Ascending aorta (tissue), 2 donors: ENCODE measurements at regions of chr19 and their contacts with region 1.

Region 1: DNA sequence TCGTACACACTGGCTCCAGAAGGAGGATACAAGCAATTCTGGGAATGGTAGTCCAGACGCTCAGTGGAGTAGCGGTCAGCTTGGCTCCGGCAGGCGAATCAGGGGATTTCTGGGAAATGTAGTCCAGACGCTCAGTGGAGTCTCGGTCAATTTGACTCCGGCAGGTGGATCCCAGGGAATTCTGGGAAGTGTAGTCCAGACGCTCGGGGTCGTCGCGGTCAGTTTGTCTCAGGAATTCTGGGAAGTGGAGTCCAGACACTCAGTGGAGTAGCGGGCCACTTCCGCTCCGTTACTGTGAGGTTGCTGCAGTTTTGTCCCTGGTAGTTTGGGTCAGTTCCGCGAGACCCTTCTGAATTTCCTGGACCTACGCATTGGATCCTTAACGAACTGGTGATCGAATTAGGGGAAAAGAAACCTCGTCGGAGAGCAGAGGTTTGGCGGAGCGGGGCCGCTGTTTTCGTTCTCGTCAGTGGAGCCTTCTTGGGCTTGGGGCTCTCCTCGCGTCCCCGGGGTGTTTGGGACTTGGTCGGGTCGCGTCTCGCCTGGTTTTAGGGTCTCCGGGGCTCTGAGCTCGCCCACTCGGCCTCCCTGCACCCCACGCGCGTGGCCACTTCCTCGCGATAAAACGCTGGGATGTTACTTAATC is at the start of gene ZNF225:
- DNase-seq: peak; percentile 92 to 99
- H3K4me3 ChIP-seq: peak within 1 kb of the TSS; percentile 79 to 84
- H3K27ac ChIP-seq: peak within 1 kb of the TSS; percentile 73 to 82
- H3K4me1 ChIP-seq: peaks cover 0 to 8% of the 10 kb centered on the region in 2 donors
- H3K27me3 ChIP-seq: no peaks in the 10 kb centered on the region
- CTCF ChIP-seq: no peak
- total RNA-seq, gene ZNF225: 3.3 TPM

Region 2: GRCh38 chr19:43826787-43827754 is 286.2 kb before region 1 on chr19 and contains the start of gene ZNF283:
- intact Hi-C with region 1: loop called (anchors 10 kb)
- DNase-seq: peak; percentile 60 to 94
- H3K4me3 ChIP-seq: peak within 1 kb of the TSS; percentile 56 to 75
- H3K27ac ChIP-seq: peak within 1 kb of the TSS; percentile 48 to 51
- H3K4me1 ChIP-seq: peaks cover 3 to 10% of the 10 kb centered on the region in 2 donors
- H3K27me3 ChIP-seq: no peaks in the 10 kb centered on the region
- CTCF ChIP-seq: no peak
- total RNA-seq, gene ZNF283: not detected

Region 3: DNA sequence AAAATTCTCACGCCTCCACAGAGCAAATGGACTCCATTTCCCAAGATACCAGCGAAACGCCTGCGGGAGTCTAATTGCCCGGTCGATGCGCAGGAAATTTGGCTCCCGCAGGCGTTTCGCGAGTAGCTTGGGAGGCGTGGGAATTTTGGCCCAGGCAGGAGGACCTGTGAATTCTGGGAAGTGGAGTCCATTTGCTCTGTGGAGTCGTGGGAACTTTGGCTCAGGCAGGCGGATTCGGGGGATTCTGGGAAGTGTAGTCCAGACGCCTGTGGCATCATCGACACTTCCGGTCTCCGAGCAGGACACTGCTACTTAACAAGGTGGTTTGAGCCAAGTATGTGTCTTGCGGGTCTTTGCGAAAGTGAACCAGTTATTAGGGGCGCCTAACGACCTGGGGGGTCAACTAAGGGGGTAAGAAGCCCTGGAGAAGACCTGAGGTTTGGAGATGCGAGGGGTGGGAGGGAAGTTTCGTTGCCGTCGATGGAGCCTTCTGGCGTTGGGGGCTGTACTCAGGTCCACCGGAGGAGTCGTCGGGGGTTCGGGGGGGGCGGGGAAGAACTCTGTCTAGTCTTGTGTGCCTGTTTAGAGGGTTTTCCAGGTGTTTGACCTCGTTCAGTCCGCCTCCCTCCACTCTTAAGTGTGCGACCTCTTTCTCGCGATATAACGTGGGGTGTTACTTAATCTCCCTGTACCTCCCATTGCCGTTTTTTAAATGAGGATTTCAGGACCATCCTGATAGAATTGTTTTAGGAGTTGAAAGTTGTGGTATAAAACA is 129.2 kb before region 1 on chr19 and contains the start of gene ZNF155:
- intact Hi-C with region 1: loop called (anchors 5 kb)
- DNase-seq: peak; percentile 77 to 95
- H3K4me3 ChIP-seq: peak within 1 kb of the TSS; percentile 74
- H3K27ac ChIP-seq: peak within 1 kb of the TSS; percentile 72 to 81
- H3K4me1 ChIP-seq: peaks cover 0 to 4% of the 10 kb centered on the region in 2 donors
- H3K27me3 ChIP-seq: no peaks in the 10 kb centered on the region
- CTCF ChIP-seq: no peak
- total RNA-seq, gene ZNF155: not detected

Region 4: GRCh38 chr19:44051654-44052402 is 61.4 kb before region 1 on chr19 and contains the start of gene ZNF223:
- intact Hi-C with region 1: loop called (anchors 1 kb)
- DNase-seq: peak; percentile 86 to 97
- H3K4me3 ChIP-seq: peak within 1 kb of the TSS; percentile 84 to 86
- H3K27ac ChIP-seq: peak within 1 kb of the TSS; percentile 61 to 71
- H3K4me1 ChIP-seq: peaks cover 4 to 7% of the 10 kb centered on the region in 2 donors
- H3K27me3 ChIP-seq: no peaks in the 10 kb centered on the region
- CTCF ChIP-seq: no peak
- total RNA-seq, gene ZNF223: not detected

Region 5: GRCh38 chr19:44141191-44142058 is 28.2 kb after region 1 on chr19 and contains the start of gene ZNF234:
- intact Hi-C with region 1: loop called (anchors 1 kb)
- DNase-seq: peak; percentile 35 to 88
- H3K4me3 ChIP-seq: peak within 1 kb of the TSS; percentile 69 to 96
- H3K27ac ChIP-seq: peak within 1 kb of the TSS; percentile 59 to 80
- H3K4me1 ChIP-seq: peaks cover 0 to 10% of the 10 kb centered on the region in 2 donors
- H3K27me3 ChIP-seq: no peaks in the 10 kb centered on the region
- CTCF ChIP-seq: no peak
- total RNA-seq, gene ZNF234: 7.9 TPM

Region 6: GRCh38 chr19:44212250-44212865 is 99.1 kb after region 1 on chr19 and contains the start of gene ZNF227:
- intact Hi-C with region 1: loop called (anchors 1 kb)
- DNase-seq: peak; percentile 71 to 97
- H3K4me3 ChIP-seq: peak within 1 kb of the TSS; percentile 70 to 71
- H3K27ac ChIP-seq: peak within 1 kb of the TSS; percentile 73 to 78
- H3K4me1 ChIP-seq: no peaks in the 10 kb centered on the region
- H3K27me3 ChIP-seq: no peaks in the 10 kb centered on the region
- CTCF ChIP-seq: no peak
- total RNA-seq, gene ZNF227: 7.1 TPM

Region 7: DNA sequence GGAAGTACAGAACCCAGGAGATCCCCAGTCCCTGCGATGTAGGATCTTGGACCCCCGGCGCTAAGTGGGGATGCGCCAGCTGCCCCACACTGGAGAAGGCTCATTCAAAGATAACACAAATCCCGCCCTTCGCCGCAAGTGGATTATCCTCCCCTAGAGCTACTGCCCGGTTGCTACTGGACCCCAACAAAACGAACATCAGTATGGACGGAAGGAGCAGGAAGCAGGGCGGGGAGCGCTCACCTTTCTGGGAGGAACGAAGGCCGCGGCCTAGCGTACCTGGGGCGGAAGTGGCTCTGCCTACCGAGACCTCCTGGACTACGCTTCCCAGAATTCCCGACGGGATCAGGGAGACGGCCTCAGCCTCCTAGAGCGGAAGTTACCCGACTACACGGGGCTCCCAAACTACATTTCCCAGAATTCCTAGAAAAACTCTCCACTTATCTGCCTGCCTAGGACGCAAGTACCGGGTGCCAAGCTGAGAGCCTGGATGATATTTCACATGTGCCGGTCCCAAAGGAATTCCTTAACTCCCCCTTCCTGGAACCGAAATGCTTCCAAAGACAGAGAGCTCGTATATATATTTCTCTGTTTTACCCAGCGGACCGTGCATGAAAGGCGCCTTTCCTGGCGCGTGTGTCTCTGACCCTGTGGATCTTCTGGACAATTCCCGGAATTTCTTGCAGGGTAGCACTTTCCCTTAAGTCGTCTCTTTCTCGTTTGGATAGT is 243.3 kb after region 1 on chr19 and contains the start of gene ZNF112:
- intact Hi-C with region 1: loop called (anchors 1 kb)
- DNase-seq: peak; percentile 41 to 90
- H3K4me3 ChIP-seq: peak within 1 kb of the TSS; percentile 69 to 73
- H3K27ac ChIP-seq: peak within 1 kb of the TSS; percentile 33 to 56
- H3K4me1 ChIP-seq: peaks cover 0 to 5% of the 10 kb centered on the region in 2 donors
- H3K27me3 ChIP-seq: no peaks in the 10 kb centered on the region
- CTCF ChIP-seq: no peak
- total RNA-seq, gene ZNF112: 0.11 TPM